ENCODE measurements at regions of chr22 and their contacts with region 1.

Region 1: GRCh38 chr22:46514592-46515207 is 22.7 kb downstream of the CELSR1 start:
- DNase-seq: peak; percentile 97
- H3K4me3 ChIP-seq: peak overlapping the region in 2 of 3 experiments; percentile 31 to 37
- H3K27ac ChIP-seq: peak overlapping the region; percentile 69
- H3K4me1 ChIP-seq: peaks cover 25% of the 10 kb centered on the region
- H3K27me3 ChIP-seq: no peaks in the 10 kb centered on the region
- CTCF ChIP-seq: no peak

Region 2: GRCh38 chr22:46057762-46058420 is 456.8 kb before region 1 on chr22:
- CTCF ChIA-PET with region 1: no interaction called
- dilution Hi-C with region 1: no loop called
- in situ Hi-C with region 1: no loop called
- intact Hi-C with region 1: no loop called
- DNase-seq: peak; percentile 86
- H3K4me3 ChIP-seq: peak overlapping the region; percentile 4 to 72 (median 59)
- H3K27ac ChIP-seq: peak overlapping the region; percentile 87
- H3K4me1 ChIP-seq: peaks cover 66% of the 10 kb centered on the region
- H3K27me3 ChIP-seq: no peaks in the 10 kb centered on the region
- CTCF ChIP-seq: no peak

Region 3: GRCh38 chr22:46450931-46451561 is 63.7 kb before region 1 on chr22:
- CTCF ChIA-PET with region 1: no interaction called
- dilution Hi-C with region 1: no loop called
- in situ Hi-C with region 1: no loop called
- intact Hi-C with region 1: loop called (anchors 1 kb)
- DNase-seq: peak; percentile 73
- H3K4me3 ChIP-seq: no peak overlapping the region
- H3K27ac ChIP-seq: no peak overlapping the region
- H3K4me1 ChIP-seq: peaks cover 58% of the 10 kb centered on the region
- H3K27me3 ChIP-seq: no peaks in the 10 kb centered on the region
- CTCF ChIP-seq: no peak

Region 4: GRCh38 chr22:46501701-46502100 is 13.0 kb before region 1 on chr22:
- CTCF ChIA-PET with region 1: no interaction called
- dilution Hi-C with region 1: no loop called
- in situ Hi-C with region 1: no loop called
- intact Hi-C with region 1: loop called (anchors 2 kb)
- DNase-seq: peak; percentile 83
- H3K4me3 ChIP-seq: no peak overlapping the region
- H3K27ac ChIP-seq: peak overlapping the region; percentile 33
- H3K4me1 ChIP-seq: peaks cover 40% of the 10 kb centered on the region
- H3K27me3 ChIP-seq: no peaks in the 10 kb centered on the region
- CTCF ChIP-seq: no peak

Region 5: GRCh38 chr22:46528121-46528610 is 13.5 kb after region 1 on chr22:
- CTCF ChIA-PET with region 1: no interaction called
- dilution Hi-C with region 1: no loop called
- in situ Hi-C with region 1: no loop called
- intact Hi-C with region 1: loop called (anchors 2 kb)
- DNase-seq: peak; percentile 96
- H3K4me3 ChIP-seq: no peak overlapping the region
- H3K27ac ChIP-seq: peak overlapping the region; percentile 47
- H3K4me1 ChIP-seq: peaks cover 55% of the 10 kb centered on the region
- H3K27me3 ChIP-seq: no peaks in the 10 kb centered on the region
- CTCF ChIP-seq: no peak

Measured in mammary epithelial cell (primary cell).